Esophagus muscularis mucosa (tissue), 4 donors: ENCODE measurements at regions of chr13 and their contacts with region 1.

Region 1: GRCh38 chr13:100584896-100585295 is 3.7 kb downstream of the GGACT start:
- DNase-seq: no peak
- H3K4me3 ChIP-seq: no peak overlapping the region
- H3K27ac ChIP-seq: no peak overlapping the region
- H3K4me1 ChIP-seq: peaks cover 4 to 19% (median 14%) of the 10 kb centered on the region in 4 donors
- H3K27me3 ChIP-seq: no peaks in the 10 kb centered on the region
- CTCF ChIP-seq: no peak
- EP300 ChIP-seq: no peak
- POLR2A ChIP-seq: no peak

Region 2: GRCh38 chr13:100674848-100675660 is 90.2 kb after region 1 on chr13:
- intact Hi-C with region 1: loop called (anchors 5 kb)
- DNase-seq: peak; percentile 100
- H3K4me3 ChIP-seq: peak overlapping the region; percentile 69 to 98 (median 92)
- H3K27ac ChIP-seq: peak overlapping the region; percentile 88 to 95 (median 90)
- H3K4me1 ChIP-seq: peaks cover 14 to 21% (median 19%) of the 10 kb centered on the region in 4 donors
- H3K27me3 ChIP-seq: no peaks in the 10 kb centered on the region
- CTCF ChIP-seq: peak in 2 of 3 experiments; percentile 6 to 32
- EP300 ChIP-seq: no peak
- POLR2A ChIP-seq: peak; percentile 14